ENCODE measurements at regions of chr6 and their contacts with region 1.

Region 1: DNA sequence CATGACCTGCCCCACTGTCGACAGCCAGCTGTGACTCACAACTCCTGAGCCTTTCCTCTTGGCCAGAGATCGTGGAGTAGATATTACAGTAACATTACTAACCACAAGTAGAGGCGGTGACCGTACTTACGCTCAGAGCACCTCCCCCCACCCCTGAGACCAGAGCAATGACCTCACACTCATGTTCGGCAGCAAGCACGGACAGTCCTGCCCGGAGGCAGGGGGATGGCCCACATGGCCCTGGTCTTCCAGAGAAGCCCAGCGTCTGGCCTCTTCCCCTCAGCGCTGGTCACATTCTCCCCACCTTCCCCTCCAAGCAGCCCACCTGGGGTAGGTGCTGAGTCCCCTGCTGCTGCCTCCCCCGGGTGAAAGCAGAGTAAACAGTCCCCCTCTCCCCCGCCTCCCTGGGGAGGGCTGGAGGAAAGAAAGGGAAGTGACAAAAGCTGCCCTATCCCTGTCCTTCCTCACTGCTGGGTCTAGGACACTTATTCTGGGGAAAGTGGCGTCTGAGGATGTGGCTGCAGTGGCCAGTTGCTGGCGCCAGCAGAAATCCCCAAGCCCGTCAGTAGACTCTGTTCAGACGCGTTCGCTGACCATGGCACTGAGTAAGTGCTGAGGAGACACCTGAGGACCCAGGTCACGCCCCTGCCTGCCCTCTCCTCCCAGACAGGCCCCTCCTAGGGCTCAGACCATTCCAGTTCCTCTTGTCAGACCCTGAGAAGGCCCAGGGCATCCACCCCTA is 68.5 kb downstream of the MRPL14 start:
- DNase-seq: peak; percentile 99
- H3K4me3 Mint-ChIP-seq: peak overlapping the region; percentile 58
- H3K27ac Mint-ChIP-seq: peak overlapping the region; percentile 93
- H3K4me1 Mint-ChIP-seq: peaks cover 66% of the 10 kb centered on the region
- H3K27me3 Mint-ChIP-seq: no peaks in the 10 kb centered on the region
- CTCF ChIP-seq: no peak

Region 2: GRCh38 chr6:44010411-44011349 is 48.1 kb before region 1 on chr6:
- CTCF ChIA-PET with region 1: no interaction called
- POLR2A ChIA-PET with region 1: no interaction called
- intact Hi-C with region 1: loop called (anchors 1 kb)
- DNase-seq: peak; percentile 91
- H3K4me3 Mint-ChIP-seq: peak overlapping the region; percentile 25
- H3K27ac Mint-ChIP-seq: peak overlapping the region; percentile 79
- H3K4me1 Mint-ChIP-seq: peaks cover 39% of the 10 kb centered on the region
- H3K27me3 Mint-ChIP-seq: no peaks in the 10 kb centered on the region
- CTCF ChIP-seq: no peak

Region 3: DNA sequence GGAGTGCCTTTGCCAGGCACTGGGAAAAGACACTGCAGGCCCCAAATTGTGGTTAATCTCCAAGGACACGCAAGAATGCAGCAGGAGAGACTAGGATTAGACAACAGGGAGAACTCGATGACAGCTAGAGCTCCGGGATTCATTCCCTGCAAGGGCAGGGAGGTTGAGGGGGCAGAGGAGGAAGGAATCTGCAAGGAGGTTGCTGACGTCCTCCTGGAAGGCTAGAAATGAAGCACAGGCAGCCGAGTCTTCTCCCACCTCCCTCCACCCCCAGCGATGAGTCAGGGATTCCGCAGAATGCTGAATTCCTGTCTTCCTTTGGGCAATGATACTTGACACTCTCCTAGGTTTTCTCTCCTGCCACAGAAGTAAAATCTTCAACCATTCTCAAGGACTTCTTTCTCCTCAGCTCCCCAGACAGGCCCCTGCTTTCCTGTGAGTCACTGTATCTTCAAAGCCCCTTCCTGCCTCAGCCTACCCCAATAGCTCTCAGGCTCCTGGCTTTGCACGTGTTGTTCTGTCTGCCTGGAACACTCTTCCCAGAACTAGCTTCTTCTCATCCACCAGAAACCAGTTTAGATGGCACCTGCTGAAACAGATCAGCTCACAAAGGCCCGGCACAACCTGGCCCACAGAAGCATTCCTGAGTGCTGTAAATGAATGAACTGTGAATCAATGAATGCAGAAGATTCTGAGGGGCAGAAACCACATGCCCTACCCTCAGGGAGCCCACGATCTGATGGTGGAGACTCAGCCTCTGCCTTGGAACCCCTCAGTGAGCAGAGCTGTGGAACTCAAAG is 17.1 kb before region 1 on chr6:
- CTCF ChIA-PET with region 1: interaction called, 4 read pairs
- POLR2A ChIA-PET with region 1: interaction called, 14 read pairs
- intact Hi-C with region 1: no loop called
- DNase-seq: peak; percentile 96
- H3K4me3 Mint-ChIP-seq: no peak overlapping the region
- H3K27ac Mint-ChIP-seq: peak overlapping the region; percentile 69
- H3K4me1 Mint-ChIP-seq: peaks cover 34% of the 10 kb centered on the region
- H3K27me3 Mint-ChIP-seq: no peaks in the 10 kb centered on the region
- CTCF ChIP-seq: no peak

Measured in MCF 10A (cell line).